Heart left ventricle (tissue), 16 donors: ENCODE measurements at regions of chr11 and their contacts with region 1.

Region 1: GRCh38 chr11:506238-506994 is 626 bp downstream of the RNH1 start:
- DNase-seq: peak; percentile 98 to 99 (median 99)
- ATAC-seq: peak; percentile 79 to 87 (median 84)
- H3K4me3 ChIP-seq: peak overlapping the region; percentile 52 to 98 (median 82)
- H3K27ac ChIP-seq: peak overlapping the region; percentile 95 to 100 (median 99)
- H3K4me1 ChIP-seq: peaks cover 8 to 59% (median 49%) of the 10 kb centered on the region in 12 donors
- H3K27me3 ChIP-seq: no peaks in the 10 kb centered on the region
- CTCF ChIP-seq: no peak
- POLR2A ChIP-seq: peak in 1 of 2 donors; percentile 69

Region 2: DNA sequence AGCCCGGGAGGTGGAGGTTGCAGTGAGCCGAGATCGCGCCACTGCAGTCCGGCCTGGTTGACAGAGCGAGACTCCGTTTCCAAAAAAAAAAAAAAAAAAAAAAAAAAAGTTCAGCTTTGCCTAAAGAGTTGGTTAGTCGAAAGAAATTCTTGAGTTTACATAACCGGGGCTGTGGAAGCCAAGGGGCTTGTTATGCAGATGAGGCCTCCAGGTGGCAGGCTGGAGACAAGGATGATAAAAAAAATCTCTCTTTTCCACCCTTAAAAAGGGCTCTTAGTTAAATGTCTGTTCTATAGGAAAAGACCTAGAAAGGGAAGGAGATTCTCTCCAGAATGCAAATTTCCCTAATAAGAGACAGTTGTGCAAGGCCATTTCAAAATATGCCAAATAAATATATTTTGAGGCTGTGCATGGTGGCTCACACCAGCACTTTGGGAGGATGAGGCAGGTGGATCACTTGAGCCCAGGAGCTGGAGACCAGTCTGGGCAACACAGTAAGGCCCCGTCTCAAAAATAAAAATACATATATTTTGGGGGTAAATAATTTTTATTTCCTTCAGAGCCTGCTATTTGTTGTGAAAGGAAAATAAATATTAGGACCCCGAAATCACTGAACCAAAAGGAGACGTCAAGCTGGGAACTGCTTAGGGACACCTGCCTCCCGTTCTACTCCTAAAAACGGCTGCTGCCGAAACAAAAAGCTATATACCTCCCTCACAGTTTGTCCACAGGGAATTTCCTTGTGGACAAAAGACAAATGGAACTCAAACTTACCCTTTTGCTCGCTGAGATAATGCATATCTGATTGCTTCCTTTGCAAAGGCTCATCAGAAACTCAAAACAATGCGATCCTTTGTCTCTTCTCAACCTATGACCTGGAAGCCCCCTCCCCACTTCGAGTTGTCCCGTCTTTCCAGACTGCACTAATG is 201.2 kb before region 1 on chr11:
- intact Hi-C with region 1: loop called in 1 of 10 experiments (anchors 10 kb)
- DNase-seq: peak in 4 of 5 donors; percentile 59 to 73 (median 68)
- ATAC-seq: peak in 1 of 4 donors; percentile 19
- H3K4me3 ChIP-seq: no peak overlapping the region
- H3K27ac ChIP-seq: peak overlapping the region in 6 of 12 donors; percentile 11 to 99 (median 62)
- H3K4me1 ChIP-seq: peaks cover 0 to 42% (median 15%) of the 10 kb centered on the region in 12 donors
- H3K27me3 ChIP-seq: peaks cover 0 to 21% (median 4%) of the 10 kb centered on the region in 9 donors
- CTCF ChIP-seq: peak; percentile 55 to 76 (median 64)
- POLR2A ChIP-seq: no peak

Region 3: GRCh38 chr11:406978-407739 is 99.3 kb before region 1 on chr11:
- intact Hi-C with region 1: loop called in 3 of 10 experiments (anchors 5 to 10 kb)
- DNase-seq: peak; percentile 85 to 93 (median 88)
- ATAC-seq: peak; percentile 44 to 81 (median 78)
- H3K4me3 ChIP-seq: peak overlapping the region; percentile 49 to 76 (median 67)
- H3K27ac ChIP-seq: peak overlapping the region; percentile 28 to 82 (median 75)
- H3K4me1 ChIP-seq: peaks cover 0 to 24% (median 15%) of the 10 kb centered on the region in 12 donors
- H3K27me3 ChIP-seq: peaks cover 0 to 8% (median 0%) of the 10 kb centered on the region in 9 donors
- CTCF ChIP-seq: no peak
- POLR2A ChIP-seq: no peak

Region 4: DNA sequence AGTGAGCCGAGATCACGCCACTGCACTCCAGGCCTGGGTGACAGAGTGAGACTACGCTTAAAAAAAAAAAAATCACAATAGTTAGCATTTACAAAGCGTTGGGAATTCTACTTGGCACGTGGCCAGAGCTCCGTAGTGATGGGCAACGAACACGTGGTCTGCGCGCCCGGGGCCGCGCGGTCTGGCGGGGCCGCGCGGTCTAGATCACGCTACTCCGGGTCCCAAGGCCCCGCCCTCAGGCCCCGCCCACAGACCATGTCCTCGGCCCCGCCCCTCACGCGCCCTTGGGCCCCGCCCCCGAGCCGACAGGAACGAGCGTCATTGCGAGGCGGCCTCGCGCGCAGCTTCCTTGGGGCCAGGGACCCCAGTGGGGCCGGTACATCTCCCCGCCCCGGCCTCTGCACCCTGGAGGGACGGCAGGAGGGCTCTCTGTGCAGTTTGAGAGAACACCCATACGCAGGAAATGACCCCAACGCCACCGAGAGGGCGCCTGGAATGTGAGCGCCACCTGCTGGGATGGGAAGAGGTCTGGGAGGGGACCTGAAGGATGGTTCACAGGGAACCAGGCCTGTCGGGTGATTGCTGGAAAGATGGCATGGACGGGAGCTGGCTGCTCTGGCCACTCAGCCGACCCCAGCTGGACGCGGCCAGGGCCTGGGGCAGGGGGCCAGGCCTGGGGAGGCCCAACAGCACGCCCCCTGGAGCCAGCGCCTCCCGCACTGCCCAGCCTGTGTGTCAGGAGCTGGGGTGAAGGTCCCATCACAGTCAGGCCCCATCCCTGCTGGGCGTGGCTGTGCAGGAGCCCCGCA is 58.3 kb before region 1 on chr11:
- intact Hi-C with region 1: loop called in 8 of 10 experiments (anchors 1 to 5 kb)
- DNase-seq: peak; percentile 95 to 98 (median 95)
- ATAC-seq: peak; percentile 85 to 90 (median 86)
- H3K4me3 ChIP-seq: peak overlapping the region; percentile 26 to 92 (median 64)
- H3K27ac ChIP-seq: peak overlapping the region; percentile 77 to 97 (median 93)
- H3K4me1 ChIP-seq: peaks cover 0 to 45% (median 28%) of the 10 kb centered on the region in 12 donors
- H3K27me3 ChIP-seq: peaks cover 0 to 3% (median 0%) of the 10 kb centered on the region in 9 donors
- CTCF ChIP-seq: peak; percentile 64 to 98 (median 84)
- POLR2A ChIP-seq: peak in 1 of 2 donors; percentile 82

Region 5: GRCh38 chr11:460331-461199 is 45.9 kb before region 1 on chr11:
- intact Hi-C with region 1: loop called in 2 of 10 experiments (anchors 5 kb)
- DNase-seq: peak; percentile 52 to 86 (median 76)
- ATAC-seq: peak; percentile 69 to 87 (median 80)
- H3K4me3 ChIP-seq: peak overlapping the region in 10 of 12 donors; percentile 28 to 56 (median 41)
- H3K27ac ChIP-seq: peak overlapping the region; percentile 10 to 88 (median 74)
- H3K4me1 ChIP-seq: peaks cover 0 to 30% (median 18%) of the 10 kb centered on the region in 12 donors
- H3K27me3 ChIP-seq: no peaks in the 10 kb centered on the region
- CTCF ChIP-seq: no peak
- POLR2A ChIP-seq: peak in 1 of 2 donors; percentile 12

Region 6: GRCh38 chr11:469684-470560 is 36.5 kb before region 1 on chr11:
- intact Hi-C with region 1: loop called in 1 of 10 experiments (anchors 5 kb)
- DNase-seq: peak in 3 of 5 donors; percentile 66 to 71 (median 69)
- ATAC-seq: peak; percentile 51 to 89 (median 67)
- H3K4me3 ChIP-seq: peak overlapping the region in 10 of 12 donors; percentile 19 to 47 (median 30)
- H3K27ac ChIP-seq: peak overlapping the region; percentile 61 to 90 (median 80)
- H3K4me1 ChIP-seq: peaks cover 7 to 27% (median 18%) of the 10 kb centered on the region in 12 donors
- H3K27me3 ChIP-seq: no peaks in the 10 kb centered on the region
- CTCF ChIP-seq: peak in 6 of 12 donors; percentile 8 to 42 (median 24)
- POLR2A ChIP-seq: no peak

Region 7: GRCh38 chr11:518463-519250 is 12.2 kb after region 1 on chr11:
- intact Hi-C with region 1: loop called in 1 of 10 experiments (anchors 1 kb)
- DNase-seq: peak; percentile 86 to 95 (median 92)
- ATAC-seq: peak; percentile 85 to 98 (median 98)
- H3K4me3 ChIP-seq: peak overlapping the region in 10 of 12 donors; percentile 2 to 49 (median 32)
- H3K27ac ChIP-seq: peak overlapping the region in 11 of 12 donors; percentile 34 to 83 (median 73)
- H3K4me1 ChIP-seq: peaks cover 0 to 10% (median 4%) of the 10 kb centered on the region in 12 donors
- H3K27me3 ChIP-seq: no peaks in the 10 kb centered on the region
- CTCF ChIP-seq: peak in 11 of 12 donors; percentile 96 to 100 (median 100)
- POLR2A ChIP-seq: peak in 1 of 2 donors; percentile 61